GM13976 (cell line): ENCODE measurements at regions of chr4 and their contacts with region 1.

Region 1: DNA sequence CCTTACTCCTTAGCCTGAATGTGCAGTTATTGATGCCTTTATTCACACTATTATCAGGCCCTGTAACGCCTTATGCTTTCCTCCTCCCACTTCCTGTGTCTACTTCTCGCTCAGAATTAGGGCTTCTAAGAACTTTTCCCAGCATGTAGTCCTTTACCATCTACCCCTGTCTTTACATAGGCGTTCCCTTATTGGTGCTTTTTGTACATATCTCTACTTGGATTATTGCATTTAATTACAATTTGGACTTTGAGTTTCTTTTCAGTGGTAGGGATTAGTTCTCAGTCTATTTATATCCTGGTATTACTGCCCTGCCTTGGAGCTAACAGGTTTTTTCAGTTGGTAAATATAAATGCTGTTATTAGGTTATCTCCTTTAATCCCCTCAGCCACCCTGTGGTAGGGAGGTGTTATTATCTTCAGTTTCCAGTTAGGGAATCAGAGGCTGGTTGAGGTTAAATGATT is 84.0 kb downstream of the RBPJ start:
- DNase-seq: no peak
- CTCF ChIP-seq: no peak

Region 2: GRCh38 chr4:26330186-26330787 is 74.5 kb before region 1 on chr4:
- in situ Hi-C with region 1: loop called (anchors 5 kb)
- DNase-seq: peak; percentile 54
- CTCF ChIP-seq: peak; percentile 54